Mammary epithelial cell (primary cell): ENCODE measurements at regions of chr6 and their contacts with region 1.

Region 1: DNA sequence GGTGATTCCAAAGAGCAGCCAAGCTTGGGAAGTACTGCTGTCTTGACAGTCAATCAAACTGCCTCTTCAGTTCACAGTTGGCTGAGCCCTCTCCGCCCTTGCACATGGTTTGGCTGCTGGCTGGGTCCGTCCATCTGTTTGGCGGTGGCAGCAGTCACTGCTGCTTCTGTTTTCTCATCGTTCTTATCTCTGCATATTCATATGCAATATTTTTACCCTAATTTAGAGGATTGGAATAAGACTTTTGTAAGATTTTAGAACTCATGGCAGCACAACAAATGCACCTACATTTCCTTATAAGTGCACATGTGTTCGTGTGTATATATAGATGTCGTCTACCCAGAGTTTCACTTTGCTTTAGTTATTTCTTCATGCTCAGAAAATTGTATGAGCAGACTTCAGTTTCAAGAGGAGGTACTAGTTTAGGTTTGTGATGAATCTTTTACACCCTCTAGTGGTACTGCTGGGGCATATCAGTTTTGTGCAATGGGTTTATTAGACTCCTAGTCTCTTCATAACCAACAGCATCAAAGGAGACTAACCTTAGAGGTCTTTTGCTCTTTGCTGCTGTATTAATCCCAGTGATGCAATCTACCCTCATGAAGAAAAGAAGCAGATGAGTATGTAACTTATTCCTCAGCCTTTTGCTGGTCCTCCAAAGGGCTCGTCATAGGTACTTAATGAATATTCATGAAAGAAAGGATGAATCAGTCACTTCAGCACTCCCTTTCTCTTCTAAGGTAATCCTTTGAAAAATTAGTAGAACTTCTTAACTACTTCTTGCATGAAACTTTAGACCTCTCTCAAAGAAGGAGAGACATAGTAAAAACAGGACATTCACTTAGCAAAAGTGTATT is 44.3 kb downstream of the KHDC1L start:
- DNase-seq: peak; percentile 59
- H3K4me3 ChIP-seq: no peak overlapping the region
- H3K27ac ChIP-seq: no peak overlapping the region
- H3K4me1 ChIP-seq: no peaks in the 10 kb centered on the region
- H3K27me3 ChIP-seq: no peaks in the 10 kb centered on the region
- CTCF ChIP-seq: peak; percentile 90 to 91

Region 2: GRCh38 chr6:72616406-72617015 is 564.5 kb before region 1 on chr6:
- CTCF ChIA-PET with region 1: no interaction called
- dilution Hi-C with region 1: no loop called
- in situ Hi-C with region 1: no loop called
- intact Hi-C with region 1: loop called (anchors 1 kb)
- DNase-seq: peak; percentile 12
- H3K4me3 ChIP-seq: no peak overlapping the region
- H3K27ac ChIP-seq: no peak overlapping the region
- H3K4me1 ChIP-seq: peaks cover 9% of the 10 kb centered on the region
- H3K27me3 ChIP-seq: no peaks in the 10 kb centered on the region
- CTCF ChIP-seq: peak; percentile 56 to 65

Region 3: DNA sequence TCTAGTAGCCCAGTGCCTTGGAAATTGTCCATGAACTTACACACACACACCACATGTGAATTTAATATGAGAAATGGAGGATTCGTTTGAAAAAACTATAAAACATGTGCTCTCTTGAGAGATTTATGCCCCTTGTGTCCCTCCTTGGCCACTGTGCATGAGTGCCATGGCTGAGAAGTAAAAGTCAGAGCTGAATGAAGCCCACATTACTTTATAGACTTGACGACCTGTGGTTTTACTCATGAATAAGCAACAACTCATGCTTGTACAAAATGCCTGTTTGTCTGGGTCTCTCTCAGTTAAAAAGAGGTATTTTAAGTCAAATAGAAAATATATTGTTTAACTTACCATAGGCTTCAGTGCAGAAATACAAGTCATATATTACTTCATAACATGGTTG is 456.4 kb before region 1 on chr6:
- CTCF ChIA-PET with region 1: no interaction called
- dilution Hi-C with region 1: no loop called
- in situ Hi-C with region 1: no loop called
- intact Hi-C with region 1: no loop called
- DNase-seq: no peak
- H3K4me3 ChIP-seq: no peak overlapping the region
- H3K27ac ChIP-seq: no peak overlapping the region
- H3K4me1 ChIP-seq: no peaks in the 10 kb centered on the region
- H3K27me3 ChIP-seq: no peaks in the 10 kb centered on the region
- CTCF ChIP-seq: no peak

Region 4: GRCh38 chr6:72748759-72749158 is 432.2 kb before region 1 on chr6:
- CTCF ChIA-PET with region 1: no interaction called
- dilution Hi-C with region 1: no loop called
- in situ Hi-C with region 1: no loop called
- intact Hi-C with region 1: loop called (anchors 5 kb)
- DNase-seq: peak; percentile 98
- H3K4me3 ChIP-seq: no peak overlapping the region
- H3K27ac ChIP-seq: no peak overlapping the region
- H3K4me1 ChIP-seq: peaks cover 28% of the 10 kb centered on the region
- H3K27me3 ChIP-seq: no peaks in the 10 kb centered on the region
- CTCF ChIP-seq: no peak

Region 5: DNA sequence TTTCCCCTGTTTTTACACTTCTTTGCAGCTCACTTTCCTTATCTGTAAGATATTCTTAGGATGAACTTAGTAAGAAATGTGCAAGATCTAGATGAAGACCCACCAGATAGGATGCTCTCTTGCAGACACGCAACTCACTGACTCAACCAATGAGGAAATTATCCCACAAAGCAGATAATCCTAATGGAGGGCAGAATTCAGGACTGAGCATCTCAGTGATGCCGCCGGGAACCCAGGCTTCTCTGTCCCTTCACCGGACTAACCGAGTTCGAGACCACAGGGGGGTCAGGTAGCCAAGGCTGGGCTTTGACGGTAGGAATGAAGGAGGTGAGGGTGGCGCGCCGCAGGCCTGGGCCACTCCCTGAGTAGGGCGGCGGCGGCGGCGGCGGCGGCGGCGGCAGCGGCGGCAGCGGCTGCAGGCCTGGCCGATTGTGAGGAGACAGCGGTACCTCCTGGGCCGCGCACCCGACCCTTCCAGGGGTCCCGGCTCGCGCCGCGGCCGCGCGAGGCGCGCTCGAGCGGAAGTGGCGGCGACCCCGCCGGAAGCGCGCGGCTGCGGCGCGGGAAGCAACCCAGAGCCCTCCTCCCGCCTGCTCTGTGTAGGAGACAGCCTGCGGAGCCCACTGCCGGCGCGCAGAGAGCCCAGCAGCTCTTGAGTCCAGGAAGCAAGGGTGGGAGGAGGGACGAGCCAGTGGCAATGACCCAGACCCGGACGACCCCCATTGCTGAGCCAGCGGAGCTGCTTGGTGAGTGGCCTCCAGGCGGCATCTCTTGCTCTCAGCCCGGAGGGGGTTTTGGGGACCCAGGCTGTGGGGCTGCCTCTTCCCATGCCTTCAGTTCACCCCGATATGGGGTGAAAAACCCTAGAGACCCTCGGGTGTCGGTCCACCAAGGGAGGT is 81.9 kb after region 1 on chr6 and contains the start of gene KHDC1:
- CTCF ChIA-PET with region 1: no interaction called
- dilution Hi-C with region 1: no loop called
- in situ Hi-C with region 1: no loop called
- intact Hi-C with region 1: loop called (anchors 2 kb)
- DNase-seq: peak; percentile 23
- H3K4me3 ChIP-seq: peak within 1 kb of the TSS; percentile 57 to 79 (median 70)
- H3K27ac ChIP-seq: peak within 1 kb of the TSS; percentile 52
- H3K4me1 ChIP-seq: peaks cover 37% of the 10 kb centered on the region
- H3K27me3 ChIP-seq: no peaks in the 10 kb centered on the region
- CTCF ChIP-seq: peak in 1 of 2 donors; percentile 7
- total RNA-seq, gene KHDC1: 0.71 to 1.2 TPM